ENCODE measurements at regions of chr12 and their contacts with region 1.

Region 1: GRCh38 chr12:15584366-15585041 is 204.7 kb downstream of the EPS8 start:
- DNase-seq: peak; percentile 61
- ATAC-seq: no peak
- H3K4me3 Mint-ChIP-seq: no peak overlapping the region
- H3K27ac Mint-ChIP-seq: no peak overlapping the region
- H3K4me1 Mint-ChIP-seq: peaks cover 20% of the 10 kb centered on the region
- H3K27me3 Mint-ChIP-seq: peaks cover 2% of the 10 kb centered on the region

Region 2: DNA sequence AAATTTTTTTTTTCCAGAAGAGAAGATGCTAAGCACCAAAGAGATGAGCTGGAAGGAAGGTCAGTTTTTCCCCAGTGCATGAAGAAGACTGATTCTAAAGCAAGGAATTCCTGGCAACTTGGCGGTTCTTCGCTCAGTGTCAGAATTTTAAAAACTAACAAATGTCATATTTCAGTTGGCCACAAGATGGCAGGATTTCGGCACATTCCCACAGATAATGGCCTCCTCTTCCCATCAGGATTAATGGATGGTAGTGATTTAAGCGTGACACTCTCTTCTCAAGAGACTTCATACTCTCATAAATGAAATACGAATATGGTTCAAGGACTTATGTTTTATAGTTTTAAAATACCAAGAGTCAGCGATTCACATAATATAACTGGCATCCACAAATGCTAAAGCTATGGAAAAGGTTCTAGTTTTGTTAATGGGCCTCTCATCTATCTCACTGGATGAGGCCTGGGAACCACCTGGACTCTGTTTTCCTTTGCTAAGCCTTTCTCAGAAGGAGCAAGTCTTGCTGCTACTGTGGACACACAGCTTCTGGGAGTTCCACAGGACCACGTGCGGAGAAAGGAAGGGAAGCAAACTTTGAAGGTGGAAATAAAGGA is 308.3 kb before region 1 on chr12:
- CTCF ChIA-PET with region 1: interaction called, 25 read pairs
- POLR2A ChIA-PET with region 1: no interaction called
- DNase-seq: no peak
- ATAC-seq: no peak
- H3K4me3 Mint-ChIP-seq: no peak overlapping the region
- H3K27ac Mint-ChIP-seq: no peak overlapping the region
- H3K4me1 Mint-ChIP-seq: peaks cover 12% of the 10 kb centered on the region
- H3K27me3 Mint-ChIP-seq: peaks cover 9% of the 10 kb centered on the region

Region 3: GRCh38 chr12:15546102-15546701 is 38.3 kb before region 1 on chr12:
- CTCF ChIA-PET with region 1: interaction called, 24 read pairs
- POLR2A ChIA-PET with region 1: no interaction called
- DNase-seq: peak; percentile 33
- ATAC-seq: peak; percentile 82
- H3K4me3 Mint-ChIP-seq: peak overlapping the region; percentile 39
- H3K27ac Mint-ChIP-seq: peak overlapping the region; percentile 83
- H3K4me1 Mint-ChIP-seq: peaks cover 35% of the 10 kb centered on the region
- H3K27me3 Mint-ChIP-seq: no peaks in the 10 kb centered on the region

Region 4: GRCh38 chr12:15789220-15790171 is 205.0 kb after region 1 on chr12 and contains the start of gene EPS8:
- CTCF ChIA-PET with region 1: interaction called, 15 read pairs
- POLR2A ChIA-PET with region 1: no interaction called
- DNase-seq: peak; percentile 89
- ATAC-seq: peak; percentile 98
- H3K4me3 Mint-ChIP-seq: peak within 1 kb of the TSS; percentile 85
- H3K27ac Mint-ChIP-seq: peak within 1 kb of the TSS; percentile 79
- H3K4me1 Mint-ChIP-seq: peaks cover 17% of the 10 kb centered on the region
- H3K27me3 Mint-ChIP-seq: peaks cover 55% of the 10 kb centered on the region
- total RNA-seq, gene EPS8: 1.0 to 2.2 TPM

Region 5: DNA sequence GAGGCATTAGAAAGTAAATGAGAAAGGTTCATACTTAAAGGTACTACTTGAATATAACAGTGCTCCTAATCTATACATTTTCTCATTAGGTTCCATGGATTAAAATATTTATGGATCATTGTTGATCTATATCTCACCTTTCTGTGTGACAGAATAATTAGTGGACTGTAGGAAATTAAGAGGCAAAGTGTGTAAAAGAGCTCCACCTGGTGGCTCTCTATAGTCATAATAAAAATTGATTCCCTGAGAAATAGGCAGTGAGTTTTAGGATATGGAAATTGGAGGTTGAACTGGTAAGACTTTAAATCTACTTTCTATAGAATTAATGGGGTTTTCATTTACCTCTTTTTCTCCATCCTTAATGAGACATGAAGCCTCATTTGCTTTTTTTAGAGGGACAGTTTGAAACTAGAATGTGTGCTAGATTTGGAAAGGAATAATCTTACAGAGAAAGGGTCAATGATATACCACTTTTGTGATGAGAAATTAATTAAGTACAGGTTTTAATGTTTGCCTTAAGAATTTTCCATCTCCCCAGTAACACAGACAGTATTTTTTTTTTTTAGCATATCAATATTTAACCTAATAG is 314.9 kb after region 1 on chr12:
- CTCF ChIA-PET with region 1: interaction called, 22 read pairs
- POLR2A ChIA-PET with region 1: interaction called, 3 read pairs
- DNase-seq: no peak
- ATAC-seq: peak; percentile 57
- H3K4me3 Mint-ChIP-seq: no peak overlapping the region
- H3K27ac Mint-ChIP-seq: no peak overlapping the region
- H3K4me1 Mint-ChIP-seq: peaks cover 12% of the 10 kb centered on the region
- H3K27me3 Mint-ChIP-seq: no peaks in the 10 kb centered on the region